Heart left ventricle (tissue), 16 donors: ENCODE measurements at regions of chr1 and their contacts with region 1.

Region 1: DNA sequence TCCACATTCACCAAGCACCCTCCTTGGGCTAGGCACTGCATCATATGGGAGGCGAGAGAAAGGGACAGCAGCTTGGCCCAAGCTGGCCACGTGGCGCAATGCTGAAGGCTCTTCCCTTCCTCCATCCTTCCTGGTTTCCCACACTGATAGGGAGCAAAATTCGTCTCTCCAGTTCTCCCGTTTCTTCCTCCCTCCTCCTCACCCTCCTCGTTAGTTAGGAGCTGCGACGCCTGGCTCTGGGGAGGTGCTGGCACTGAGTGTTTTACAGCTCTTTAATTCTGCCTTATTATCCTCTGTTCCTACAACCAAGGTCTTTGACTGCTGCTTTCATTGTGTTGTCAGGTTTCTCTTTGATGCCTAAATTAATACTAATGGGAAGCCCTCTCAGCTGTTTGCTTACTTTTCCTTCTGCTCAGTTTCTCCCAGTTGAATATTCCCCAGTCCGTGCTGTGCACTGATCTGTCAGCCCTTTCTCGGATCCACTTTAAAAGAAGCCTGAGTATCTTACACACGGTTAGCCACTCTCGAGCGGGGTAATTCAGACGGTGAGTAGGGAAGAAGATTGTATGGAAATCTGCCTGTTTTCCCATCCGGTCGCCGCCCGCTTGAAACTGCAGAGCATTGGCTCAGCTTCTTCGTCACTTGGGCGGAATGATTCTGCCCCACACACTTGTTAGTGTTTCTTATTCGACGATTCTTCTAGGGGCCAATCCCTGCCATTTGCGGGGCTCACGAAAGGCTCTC is 56.2 kb upstream of the SMYD2 start:
- DNase-seq: peak in 1 of 5 donors; percentile 45
- ATAC-seq: peak in 1 of 4 donors; percentile 25
- H3K4me3 ChIP-seq: peak overlapping the region in 10 of 12 donors; percentile 7 to 48 (median 23)
- H3K27ac ChIP-seq: peak overlapping the region in 4 of 12 donors; percentile 9 to 55 (median 42)
- H3K4me1 ChIP-seq: peaks cover 0 to 26% (median 5%) of the 10 kb centered on the region in 12 donors
- H3K27me3 ChIP-seq: no peaks in the 10 kb centered on the region
- CTCF ChIP-seq: no peak
- POLR2A ChIP-seq: no peak

Region 2: DNA sequence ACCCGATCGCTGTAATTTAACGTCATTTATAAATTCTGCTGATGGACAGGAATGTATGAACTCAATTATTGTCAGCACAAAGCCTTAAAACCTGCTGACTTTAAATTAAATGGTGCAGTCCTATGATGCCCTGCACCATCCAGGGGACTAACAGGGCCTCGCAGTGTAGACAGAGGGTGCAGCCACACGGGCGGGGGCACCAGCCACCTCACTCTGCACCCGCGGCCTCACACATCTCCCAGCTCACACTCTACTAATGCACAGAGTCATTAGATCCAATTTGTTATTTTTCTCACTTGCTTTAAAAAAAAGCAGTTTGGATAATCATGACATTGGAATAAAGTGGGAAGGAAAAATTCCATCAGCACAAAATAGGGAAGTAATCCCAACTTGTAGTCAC is 187.3 kb before region 1 on chr1:
- intact Hi-C with region 1: no loop called
- DNase-seq: no peak
- ATAC-seq: no peak
- H3K4me3 ChIP-seq: no peak overlapping the region
- H3K27ac ChIP-seq: no peak overlapping the region
- H3K4me1 ChIP-seq: peaks cover 0 to 9% (median 0%) of the 10 kb centered on the region in 12 donors
- H3K27me3 ChIP-seq: no peaks in the 10 kb centered on the region
- CTCF ChIP-seq: no peak
- POLR2A ChIP-seq: no peak

Region 3: GRCh38 chr1:214261206-214262123 is 36.7 kb after region 1 on chr1:
- intact Hi-C with region 1: loop called in 3 of 10 experiments (anchors 5 kb)
- DNase-seq: peak; percentile 85 to 91 (median 89)
- ATAC-seq: peak; percentile 95 to 98 (median 97)
- H3K4me3 ChIP-seq: no peak overlapping the region
- H3K27ac ChIP-seq: peak overlapping the region in 10 of 12 donors; percentile 40 to 86 (median 68)
- H3K4me1 ChIP-seq: peaks cover 0 to 20% (median 5%) of the 10 kb centered on the region in 12 donors
- H3K27me3 ChIP-seq: peaks cover 0 to 56% (median 6%) of the 10 kb centered on the region in 9 donors
- CTCF ChIP-seq: peak; percentile 93 to 99 (median 97)
- POLR2A ChIP-seq: no peak

Region 4: GRCh38 chr1:214271174-214271858 is 46.5 kb after region 1 on chr1:
- intact Hi-C with region 1: loop called in 1 of 10 experiments (anchors 10 kb)
- DNase-seq: no peak
- ATAC-seq: peak in 2 of 4 donors; percentile 55 to 68
- H3K4me3 ChIP-seq: no peak overlapping the region
- H3K27ac ChIP-seq: peak overlapping the region in 5 of 12 donors; percentile 13 to 43 (median 26)
- H3K4me1 ChIP-seq: peaks cover 0 to 12% (median 2%) of the 10 kb centered on the region in 12 donors
- H3K27me3 ChIP-seq: peaks cover 0 to 44% (median 5%) of the 10 kb centered on the region in 9 donors
- CTCF ChIP-seq: peak in 4 of 12 donors; percentile 15 to 45 (median 26)
- POLR2A ChIP-seq: no peak